Activated CD4-positive, alpha-beta T cell treated with anti-CD3 and anti-CD28 coated beads for 36 hours (primary cell): ENCODE measurements at regions of chr10 and their contacts with region 1.

Region 1: GRCh38 chr10:23399701-23400144 is 39.2 kb upstream of the OTUD1 start:
- DNase-seq: no peak
- ATAC-seq: no peak
- H3K4me3 Mint-ChIP-seq: no peak overlapping the region
- H3K27ac Mint-ChIP-seq: no peak overlapping the region
- H3K4me1 Mint-ChIP-seq: no peaks in the 10 kb centered on the region
- H3K27me3 Mint-ChIP-seq: no peaks in the 10 kb centered on the region

Region 2: GRCh38 chr10:23192737-23193434 is 206.8 kb before region 1 on chr10:
- CTCF ChIA-PET with region 1: no interaction called
- POLR2A ChIA-PET with region 1: no interaction called
- intact Hi-C with region 1: loop called in 1 of 2 experiments (anchors 10 kb)
- DNase-seq: peak; percentile 38
- ATAC-seq: no peak
- H3K4me3 Mint-ChIP-seq: no peak overlapping the region
- H3K27ac Mint-ChIP-seq: no peak overlapping the region
- H3K4me1 Mint-ChIP-seq: peaks cover 9% of the 10 kb centered on the region
- H3K27me3 Mint-ChIP-seq: peaks cover 56% of the 10 kb centered on the region

Region 3: DNA sequence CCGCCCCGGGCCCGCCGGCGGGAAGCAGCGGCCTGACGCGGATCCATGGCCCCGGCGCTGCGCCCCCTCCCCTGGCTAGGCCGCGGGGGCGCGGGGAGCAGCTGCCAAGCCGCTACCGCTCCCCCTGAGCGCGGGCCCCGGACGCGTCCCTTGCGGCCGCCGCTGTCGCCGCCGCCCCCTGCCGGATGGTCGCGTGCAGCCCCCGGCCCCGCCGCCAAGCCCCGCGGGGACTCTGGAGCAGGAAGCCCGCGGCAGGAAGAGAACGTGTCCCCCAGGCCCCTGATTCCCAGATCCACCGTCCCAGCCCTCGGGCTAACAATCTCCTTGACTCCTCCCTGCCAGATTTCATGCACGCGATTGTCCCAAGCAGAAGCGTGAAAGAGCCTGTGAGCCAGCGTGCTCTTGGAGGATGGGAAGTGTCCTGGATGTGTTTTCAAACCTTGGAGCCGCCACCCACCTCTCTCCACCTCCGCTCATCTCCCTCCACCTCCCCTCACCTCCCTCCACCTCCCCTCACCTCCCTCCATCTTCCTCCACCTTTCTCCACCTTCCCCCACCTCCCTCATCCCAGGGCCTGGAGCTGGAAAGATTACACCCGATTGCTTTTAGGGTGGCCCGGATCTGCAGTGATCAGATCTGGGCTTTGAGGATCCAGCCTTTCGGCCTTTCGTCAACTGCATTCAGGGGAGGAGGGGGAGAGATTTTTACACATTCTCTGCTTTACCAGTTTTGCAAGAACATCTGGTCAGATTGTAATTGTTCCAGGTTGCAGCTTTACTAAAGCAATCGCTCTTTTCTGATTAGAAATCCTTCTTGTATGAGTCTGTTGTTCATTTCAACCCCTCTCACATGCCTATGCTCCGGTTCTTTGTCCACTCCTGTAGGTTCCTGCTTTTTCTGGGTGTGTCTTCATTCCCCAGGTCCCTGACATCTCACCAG is 1553.3 kb after region 1 on chr10:
- CTCF ChIA-PET with region 1: no interaction called
- POLR2A ChIA-PET with region 1: interaction called, 10 read pairs
- intact Hi-C with region 1: no loop called
- DNase-seq: peak; percentile 59
- ATAC-seq: peak; percentile 69
- H3K4me3 Mint-ChIP-seq: peak overlapping the region; percentile 67
- H3K27ac Mint-ChIP-seq: no peak overlapping the region
- H3K4me1 Mint-ChIP-seq: peaks cover 17% of the 10 kb centered on the region
- H3K27me3 Mint-ChIP-seq: peaks cover 4% of the 10 kb centered on the region